Head of caudate nucleus (tissue), 42 donors: ENCODE measurements at regions of chr12 and their contacts with region 1.

Region 1: DNA sequence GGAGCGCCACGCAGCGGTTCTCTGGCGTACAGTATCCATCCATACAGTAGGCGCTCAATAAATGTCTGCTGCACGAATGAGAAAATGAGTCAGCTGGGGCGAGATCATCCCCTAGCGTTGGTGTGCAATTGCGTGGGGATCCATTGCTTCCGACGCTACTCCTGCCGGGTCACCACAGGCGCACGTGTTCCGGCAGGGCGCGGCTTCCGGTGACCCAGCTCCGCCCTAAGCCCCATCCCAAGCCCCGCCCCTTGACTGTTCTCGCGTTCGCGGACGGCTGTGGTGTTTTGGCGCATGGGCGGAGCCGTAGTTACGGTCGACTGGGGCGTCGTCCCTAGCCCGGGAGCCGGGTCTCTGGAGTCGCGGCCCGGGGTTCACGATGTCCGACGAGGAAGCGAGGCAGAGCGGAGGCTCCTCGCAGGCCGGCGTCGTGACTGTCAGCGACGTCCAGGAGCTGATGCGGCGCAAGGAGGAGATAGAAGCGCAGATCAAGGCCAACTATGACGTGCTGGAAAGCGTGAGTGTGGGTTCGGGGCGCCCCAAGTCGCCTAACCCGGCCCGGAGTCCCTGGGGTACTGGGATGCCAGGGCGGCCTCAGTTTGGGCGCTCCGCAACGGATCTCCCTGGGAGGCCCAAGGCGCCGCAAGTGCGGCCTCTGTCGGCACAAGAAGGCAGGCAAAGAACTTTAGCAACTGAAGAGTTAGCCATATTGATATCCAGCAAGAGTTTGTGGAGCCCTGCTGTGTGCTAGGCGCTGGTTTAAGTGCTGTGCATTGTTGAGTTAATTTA is at the start of gene PSMD9:
- DNase-seq: peak; percentile 93 to 99 (median 98)

Region 2: GRCh38 chr12:121793838-121794533 is 94.7 kb before region 1 on chr12:
- intact Hi-C with region 1: loop called (anchors 5 kb)
- DNase-seq: peak; percentile 68 to 95 (median 88)

Region 3: DNA sequence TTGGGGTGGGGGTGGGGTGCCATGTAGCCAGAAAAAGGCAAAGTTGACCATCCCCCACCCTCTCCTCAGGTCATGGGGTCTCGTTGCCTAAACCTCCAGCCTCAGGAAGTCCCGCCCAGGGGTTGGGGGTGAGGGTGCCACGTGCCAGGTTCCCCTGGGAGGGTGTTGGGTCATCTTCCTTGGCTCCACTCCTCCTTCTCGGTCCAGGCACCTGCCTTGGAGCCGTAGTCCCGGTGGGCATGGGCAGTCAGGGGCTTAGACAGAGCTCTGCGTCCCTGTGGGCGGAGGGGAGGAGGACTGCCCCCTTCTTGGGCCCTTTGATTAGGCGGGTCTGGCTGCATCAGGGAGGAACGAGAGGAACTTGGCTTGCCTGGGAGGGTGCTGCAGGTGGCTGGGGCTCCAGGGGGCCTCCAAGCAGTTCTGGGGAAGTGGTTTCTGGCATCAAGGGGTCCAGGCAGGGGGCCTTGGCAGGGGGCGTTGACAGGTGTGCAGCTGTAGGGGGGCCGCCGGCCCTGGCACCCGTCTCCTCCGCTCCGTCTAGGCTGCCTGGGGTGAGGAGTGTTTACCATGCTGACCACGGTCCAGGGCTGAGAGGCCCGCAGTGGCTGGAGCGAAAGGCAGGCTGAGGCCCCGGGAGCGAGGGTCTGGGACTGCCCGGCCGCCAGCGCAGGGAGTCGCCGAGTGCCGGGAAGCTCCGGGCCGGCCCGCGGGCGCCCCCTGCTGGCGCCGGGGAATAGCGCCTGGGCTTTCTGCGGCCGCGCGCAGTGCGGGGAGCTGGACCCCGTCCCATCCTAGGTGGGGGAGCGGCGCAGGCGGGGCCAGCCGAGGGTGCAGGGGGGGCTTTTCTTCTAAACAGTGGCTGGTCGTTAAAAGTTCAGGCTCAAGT is 77.0 kb before region 1 on chr12:
- intact Hi-C with region 1: loop called (anchors 5 kb)
- DNase-seq: peak in 39 of 42 donors; percentile 47 to 86 (median 72)

Region 4: DNA sequence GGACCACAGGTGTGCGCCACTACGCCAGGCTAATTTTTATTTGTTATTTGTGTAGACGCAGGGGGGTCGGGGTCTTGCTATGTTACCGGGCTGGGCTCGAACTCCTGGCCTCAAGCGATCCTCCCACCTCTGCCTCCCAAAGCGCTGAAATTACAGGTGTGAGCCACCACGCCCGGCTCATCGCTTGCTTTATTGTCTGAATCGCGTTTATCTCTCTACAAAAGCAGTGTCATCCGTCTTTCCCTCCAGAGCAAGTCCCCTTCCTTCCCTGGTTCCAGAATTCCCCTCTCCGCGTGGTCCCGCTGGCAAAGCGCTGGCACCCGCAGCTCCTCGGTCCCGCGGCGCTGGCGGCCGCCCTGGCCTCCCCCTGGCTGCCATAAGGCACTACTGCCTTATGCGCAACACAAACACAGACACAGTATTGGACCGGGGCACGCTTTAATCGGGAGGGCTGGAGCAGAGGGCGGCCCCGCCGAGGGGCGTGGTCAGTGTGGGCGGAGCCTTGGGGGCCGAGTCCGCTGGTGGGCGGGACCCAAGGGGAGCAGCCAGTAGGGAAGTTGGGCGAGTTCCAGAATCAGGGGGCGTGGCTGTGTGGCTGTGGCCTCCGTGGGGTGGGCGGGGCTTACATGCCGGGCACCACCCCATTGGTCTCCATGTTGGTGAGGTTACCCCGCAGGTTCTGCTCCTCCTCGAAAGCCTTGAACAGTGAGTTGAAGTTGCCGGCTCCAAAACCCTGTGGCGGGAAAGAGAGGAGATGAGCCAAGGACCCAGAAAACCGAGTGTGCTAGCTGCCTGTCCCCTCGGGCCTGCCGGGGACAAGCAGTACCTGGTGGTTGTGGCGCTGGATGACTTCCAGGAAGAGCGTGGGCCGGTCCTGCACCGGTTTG is 49.3 kb before region 1 on chr12:
- intact Hi-C with region 1: no loop called
- DNase-seq: peak; percentile 92 to 99 (median 97)